AG04449 (cell line): ENCODE measurements at regions of chr1 and their contacts with region 1.

Region 1: DNA sequence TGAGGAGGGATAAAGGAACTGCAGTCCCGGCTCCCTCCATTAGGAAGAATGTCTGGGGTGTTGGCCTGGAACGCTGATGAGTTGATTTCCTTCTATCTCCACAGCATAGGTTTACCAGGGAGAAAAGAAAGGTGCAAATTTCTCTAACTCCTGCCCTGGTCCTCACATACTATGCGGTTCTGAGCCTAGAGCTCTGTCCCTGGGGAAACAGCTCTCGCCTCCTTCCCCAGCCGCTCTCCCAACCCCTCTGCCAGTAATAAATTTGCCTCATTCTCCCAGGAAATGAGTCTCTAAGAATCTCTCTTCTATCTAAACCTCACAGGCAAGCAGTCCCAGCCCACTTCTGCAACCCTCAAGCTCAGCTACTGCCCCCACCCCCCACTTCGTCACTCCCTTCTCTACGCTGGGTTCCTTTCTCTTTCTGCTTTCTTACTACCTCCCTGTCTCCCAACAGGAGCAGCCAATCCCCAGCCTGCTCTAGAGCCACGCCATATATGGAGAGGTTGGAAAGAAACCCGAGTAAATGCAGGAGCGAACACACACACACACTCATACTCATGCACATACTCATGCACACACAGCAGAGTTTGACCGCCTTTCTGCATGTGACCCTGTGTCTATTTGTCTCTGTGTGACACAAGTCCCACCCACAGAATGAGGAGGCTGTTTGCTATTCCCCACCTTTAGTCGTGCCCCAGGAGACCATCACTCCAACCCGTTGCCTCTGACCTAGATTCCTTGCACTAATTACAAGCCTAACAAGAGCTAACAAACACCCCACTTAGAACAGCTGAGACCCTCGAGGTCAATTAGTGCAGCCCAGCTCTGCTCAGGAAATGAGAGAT is 13.4 kb downstream of the PLEKHO1 start:
- DNase-seq: peak; percentile 99
- H3K4me3 ChIP-seq: peak overlapping the region; percentile 29; the same call in 1 of the 2 replicates
- CTCF ChIP-seq: no peak

Region 2: DNA sequence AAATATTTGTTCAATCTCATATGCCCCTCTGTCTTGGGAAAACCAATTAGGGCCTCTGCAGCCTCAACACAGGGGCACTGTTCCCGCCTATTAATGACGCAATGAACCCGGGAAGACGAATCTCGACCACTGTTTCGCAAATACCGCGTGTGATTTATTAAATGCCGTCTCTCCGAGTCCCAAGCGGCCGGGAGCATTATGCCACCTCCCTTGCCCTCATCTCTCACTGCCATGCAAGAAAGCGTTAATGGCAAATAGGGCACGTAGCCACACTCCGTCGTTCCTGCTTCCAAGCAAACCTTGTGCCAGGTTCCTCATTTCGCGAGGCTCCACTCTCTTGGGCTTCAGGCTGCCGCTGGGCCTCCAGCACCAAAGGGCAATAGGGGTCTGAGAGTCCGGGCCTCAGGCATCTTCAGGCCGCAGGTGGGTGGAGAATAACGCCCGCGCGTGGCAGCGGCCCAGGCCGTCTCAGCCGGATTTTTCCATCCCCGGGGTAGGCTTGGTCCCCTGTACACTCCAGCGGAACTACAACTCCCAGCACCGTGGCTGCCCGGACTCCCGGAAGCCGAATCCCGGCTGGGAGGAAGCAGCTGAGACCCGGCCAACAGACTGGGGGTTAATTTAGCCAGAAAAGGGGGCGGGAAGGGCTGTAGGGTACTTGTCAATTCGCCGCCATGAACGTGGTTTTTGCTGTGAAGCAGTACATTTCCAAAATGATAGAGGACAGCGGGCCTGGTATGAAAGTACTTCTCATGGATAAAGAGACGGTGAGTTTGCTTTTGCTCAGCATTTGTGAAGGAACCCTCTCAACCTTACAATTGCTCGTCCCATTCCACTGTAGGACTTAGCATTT is 95.7 kb before region 1 on chr1 and contains the start of gene VPS45:
- CTCF ChIA-PET with region 1: interaction called, 486 read pairs
- POLR2A ChIA-PET with region 1: no interaction called
- DNase-seq: peak; percentile 42
- H3K4me3 ChIP-seq: peak within 1 kb of the TSS; percentile 79
- CTCF ChIP-seq: peak; percentile 12

Region 3: GRCh38 chr1:150118716-150119115 is 44.4 kb before region 1 on chr1:
- CTCF ChIA-PET with region 1: no interaction called
- POLR2A ChIA-PET with region 1: no interaction called
- DNase-seq: no peak
- H3K4me3 ChIP-seq: no peak overlapping the region
- CTCF ChIP-seq: no peak

Region 4: DNA sequence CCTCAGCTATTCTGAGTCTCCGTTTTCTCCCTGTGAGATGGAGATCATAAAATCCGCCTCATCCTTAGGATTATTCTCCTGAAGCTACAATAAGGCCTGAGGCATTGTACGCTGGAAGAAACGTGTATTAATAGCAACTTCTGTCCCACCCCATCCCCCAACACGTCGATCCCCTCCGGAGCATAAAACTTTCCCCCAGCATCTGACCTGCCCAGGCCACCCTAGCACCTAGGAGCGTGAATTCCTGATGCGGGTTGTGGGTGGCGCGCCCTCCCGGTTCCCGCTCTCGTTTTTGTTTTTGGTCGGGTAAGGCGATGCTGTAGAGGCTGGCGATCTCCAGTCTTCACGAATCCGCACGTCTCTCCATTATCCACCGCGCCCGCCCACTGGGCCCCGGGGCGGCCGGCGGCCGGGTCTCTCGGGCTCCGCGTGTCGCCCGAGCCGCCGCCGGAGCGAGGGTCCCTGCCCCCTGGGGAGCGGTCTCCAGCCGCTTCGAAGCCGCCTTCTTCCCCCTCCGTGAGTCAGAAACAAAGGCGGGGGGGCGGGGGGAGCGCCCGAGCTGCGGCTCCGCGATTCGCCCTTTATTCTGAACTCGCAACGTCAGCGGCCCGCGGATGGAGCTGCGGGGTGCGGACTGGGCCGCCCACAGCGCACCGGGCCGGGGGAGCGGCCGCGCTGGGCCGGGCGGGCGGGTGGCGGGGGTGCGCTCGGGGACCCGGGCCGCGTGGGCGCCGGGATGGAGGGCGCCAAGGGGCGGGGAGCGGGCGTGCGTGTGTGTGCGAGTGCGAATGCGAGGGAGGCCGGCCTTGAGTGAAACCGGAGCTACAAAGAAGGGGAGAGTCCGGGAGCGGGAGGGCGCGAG is 13.6 kb before region 1 on chr1 and contains the start of gene PLEKHO1:
- CTCF ChIA-PET with region 1: interaction called, 26 read pairs
- POLR2A ChIA-PET with region 1: interaction called, 64 read pairs
- DNase-seq: no peak
- H3K4me3 ChIP-seq: peak within 1 kb of the TSS; percentile 77
- CTCF ChIP-seq: no peak

Region 5: DNA sequence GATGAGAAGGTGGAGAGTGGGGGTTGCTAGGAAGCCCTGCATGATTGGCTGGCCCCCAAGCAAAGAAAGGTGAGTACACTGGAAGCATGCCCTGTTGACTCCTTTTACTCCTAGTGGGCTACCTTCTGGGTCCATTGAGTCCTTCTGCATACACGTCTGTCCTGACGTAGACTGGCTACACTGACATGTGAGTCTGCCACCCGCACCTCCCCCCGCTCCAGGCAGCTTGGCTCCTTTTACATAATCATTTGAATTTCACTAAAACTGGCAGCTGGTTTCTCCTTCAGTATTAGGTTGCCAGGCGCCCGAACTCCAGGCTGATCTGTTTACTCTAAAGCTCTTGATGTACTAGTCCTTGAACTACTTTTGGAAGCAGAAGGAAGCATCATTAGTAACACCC is 139.3 kb after region 1 on chr1:
- CTCF ChIA-PET with region 1: no interaction called
- POLR2A ChIA-PET with region 1: no interaction called
- DNase-seq: no peak
- H3K4me3 ChIP-seq: no peak overlapping the region
- CTCF ChIP-seq: no peak